ENCODE measurements at regions of chr3 and their contacts with region 1.

Region 1: DNA sequence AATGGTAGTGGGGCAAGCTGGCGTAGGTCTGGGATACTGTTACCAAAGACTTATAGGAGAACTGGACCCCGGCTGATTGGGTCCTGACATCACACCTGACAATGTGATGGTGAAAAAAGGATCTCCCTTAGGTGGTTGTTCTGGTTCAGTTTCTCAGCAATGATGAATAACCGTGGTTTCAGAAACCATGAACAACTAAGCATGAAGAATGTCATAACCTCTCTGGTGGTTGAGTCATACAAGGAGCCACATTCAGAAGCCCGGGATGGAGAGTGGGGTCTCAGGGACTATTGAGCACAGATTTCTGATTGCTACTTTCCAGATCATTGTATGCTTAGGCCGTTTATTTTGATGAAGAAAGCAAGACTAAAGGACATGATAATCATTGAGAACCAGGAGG is 17.4 kb downstream of the GPR160 start:
- DNase-seq: peak; percentile 47
- H3K4me3 ChIP-seq: peak overlapping the region; percentile 66
- H3K27ac ChIP-seq: peak overlapping the region; percentile 98
- H3K4me1 ChIP-seq: peaks cover 75% of the 10 kb centered on the region
- CTCF ChIP-seq: no peak

Region 2: GRCh38 chr3:169931747-169932520 is 123.3 kb before region 1 on chr3:
- CTCF ChIA-PET with region 1: no interaction called
- POLR2A ChIA-PET with region 1: interaction called, 4 read pairs
- intact Hi-C with region 1: loop called (anchors 2 kb)
- DNase-seq: peak; percentile 94
- H3K4me3 ChIP-seq: peak overlapping the region; percentile 56
- H3K27ac ChIP-seq: peak overlapping the region; percentile 86
- H3K4me1 ChIP-seq: peaks cover 81% of the 10 kb centered on the region
- CTCF ChIP-seq: no peak

Region 3: GRCh38 chr3:169980055-169980454 is 75.2 kb before region 1 on chr3:
- CTCF ChIA-PET with region 1: no interaction called
- POLR2A ChIA-PET with region 1: interaction called, 4 read pairs
- intact Hi-C with region 1: loop called (anchors 2 kb)
- DNase-seq: no peak
- H3K4me3 ChIP-seq: no peak overlapping the region
- H3K27ac ChIP-seq: peak overlapping the region; percentile 78
- H3K4me1 ChIP-seq: peaks cover 65% of the 10 kb centered on the region
- CTCF ChIP-seq: no peak

Region 4: GRCh38 chr3:170078620-170079281 is 23.5 kb after region 1 on chr3:
- CTCF ChIA-PET with region 1: interaction called, 6 read pairs
- POLR2A ChIA-PET with region 1: interaction called, 16 read pairs
- intact Hi-C with region 1: no loop called
- DNase-seq: peak; percentile 51
- H3K4me3 ChIP-seq: no peak overlapping the region
- H3K27ac ChIP-seq: peak overlapping the region; percentile 63
- H3K4me1 ChIP-seq: peaks cover 59% of the 10 kb centered on the region
- CTCF ChIP-seq: peak; percentile 77

Region 5: DNA sequence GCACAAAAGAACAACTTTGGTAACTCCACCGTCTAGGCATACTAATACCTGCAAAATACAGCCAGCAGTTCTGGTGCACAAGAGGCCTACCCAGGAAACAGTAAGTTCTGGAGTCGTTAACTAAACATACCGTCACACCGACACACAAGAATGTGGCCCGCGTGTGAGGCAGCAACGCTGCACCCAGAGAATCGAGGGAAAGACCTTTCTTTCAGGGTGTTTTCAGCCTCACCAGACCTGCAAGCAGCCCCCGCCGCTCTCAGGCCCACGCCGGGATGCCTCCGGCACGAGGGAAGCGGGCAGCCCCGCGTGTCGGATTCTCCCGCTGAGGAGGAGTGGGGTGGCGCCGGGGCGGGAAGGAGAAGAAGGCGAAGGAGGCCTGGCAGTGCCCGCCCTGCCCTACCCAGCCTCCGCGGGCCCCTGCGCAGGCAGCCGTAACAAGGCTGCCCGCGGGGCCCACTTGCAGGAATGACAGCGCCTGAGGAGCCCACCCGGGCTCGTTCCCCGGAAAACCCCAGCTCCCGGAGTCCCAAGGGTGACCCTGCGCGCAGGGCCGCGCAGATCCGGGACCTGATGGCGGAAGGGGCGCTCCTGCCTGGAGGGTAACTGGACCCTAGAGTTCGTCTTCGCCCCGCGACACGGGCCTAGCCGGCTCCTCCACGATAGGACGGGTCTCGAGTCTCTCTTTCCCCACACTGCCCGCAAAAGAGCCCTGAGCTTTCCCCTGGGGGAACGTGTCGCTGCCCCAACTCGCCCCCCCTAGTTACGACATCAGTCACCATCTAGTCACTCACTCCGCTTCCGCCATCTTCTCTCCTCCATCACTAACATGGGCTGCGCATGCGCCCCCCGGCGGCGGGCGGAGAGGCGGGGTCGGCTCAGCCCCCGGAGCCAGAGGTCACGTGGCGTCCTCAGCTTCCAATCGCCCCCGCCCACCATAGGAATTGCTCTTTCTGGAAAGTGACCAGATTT is 126.0 kb after region 1 on chr3 and contains the start of gene PHC3:
- CTCF ChIA-PET with region 1: no interaction called
- POLR2A ChIA-PET with region 1: interaction called, 5 read pairs
- intact Hi-C with region 1: loop called (anchors 2 kb)
- DNase-seq: peak; percentile 94
- H3K4me3 ChIP-seq: peak within 1 kb of the TSS; percentile 79
- H3K27ac ChIP-seq: peak within 1 kb of the TSS; percentile 65
- H3K4me1 ChIP-seq: peaks cover 23% of the 10 kb centered on the region
- CTCF ChIP-seq: peak; percentile 51; the same call in 1 of the 2 replicates
- total RNA-seq, gene PHC3: 36.1 and 40.6 TPM in 2 replicates